Dorsolateral prefrontal cortex (tissue), 120 donors: ENCODE measurements at regions of chr1 and their contacts with region 1.

Region 1: DNA sequence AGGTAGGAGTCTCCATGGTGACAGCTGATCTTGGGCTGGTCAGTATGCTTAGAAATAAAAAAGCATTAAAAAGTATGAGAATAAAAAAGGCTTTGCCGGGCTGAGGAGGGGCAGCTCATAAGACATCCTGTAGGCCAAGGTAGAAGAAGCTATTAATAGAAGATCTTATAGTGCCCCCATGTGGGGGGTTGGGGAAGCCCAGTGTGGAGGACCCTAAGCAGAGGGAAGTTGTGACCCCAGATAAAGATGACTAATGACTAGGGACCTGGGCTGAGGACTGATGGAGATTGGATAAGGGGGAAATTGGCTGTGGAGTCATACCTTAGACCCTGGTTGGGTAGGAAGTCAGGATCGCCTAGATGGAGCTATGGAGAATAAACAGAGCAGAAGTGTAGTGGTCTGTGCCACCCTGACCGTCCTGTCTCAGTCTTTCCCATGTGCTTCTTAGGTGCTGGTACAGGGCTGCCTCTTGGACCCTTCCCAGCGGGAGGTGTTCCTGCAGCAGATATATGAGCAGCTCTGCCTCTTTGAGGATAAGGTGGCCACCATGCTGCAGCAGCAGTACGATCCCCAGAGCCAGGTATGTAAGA is 25.0 kb downstream of the SZT2 start:
- DNase-seq: peak in 5 of 10 donors; percentile 25 to 48 (median 44)
- H3K4me3 ChIP-seq: no peak overlapping the region
- H3K27ac ChIP-seq: peak overlapping the region in 1 of 59 donors; percentile 1
- H3K27me3 ChIP-seq: no peaks in the 10 kb centered on the region
- CTCF ChIP-seq: peak in 55 of 56 donors; percentile 32 to 80 (median 66)

Region 2: DNA sequence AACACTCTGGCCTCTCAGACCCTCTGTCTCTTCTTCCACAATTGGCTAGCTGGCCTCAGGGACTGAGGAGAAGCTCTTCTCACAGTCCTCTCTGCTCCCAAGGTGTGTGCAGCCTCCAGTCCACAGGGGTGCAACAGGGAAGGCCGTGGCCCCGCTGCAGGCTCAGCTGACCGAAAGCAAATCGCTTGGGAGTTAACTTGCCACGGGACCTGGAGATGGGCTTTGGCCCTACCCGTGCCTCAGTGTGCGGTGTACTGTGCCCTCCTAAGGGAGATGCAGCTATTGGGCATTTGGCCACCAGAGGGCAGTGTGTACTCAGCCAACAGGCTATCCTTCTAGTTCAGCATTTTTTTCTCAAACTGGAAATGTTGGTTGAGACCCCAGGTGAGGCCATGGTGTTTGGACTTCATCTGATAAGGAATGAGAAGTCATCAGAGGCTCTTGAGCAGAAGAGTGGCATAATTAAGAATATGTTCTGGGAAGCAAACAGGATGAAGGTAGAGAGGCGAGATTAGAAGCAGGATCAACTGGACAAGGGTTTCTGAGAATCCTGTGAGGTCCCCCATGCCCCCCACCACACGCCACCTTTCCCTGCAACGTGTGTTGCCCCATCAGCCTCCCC is 187.5 kb before region 1 on chr1:
- intact Hi-C with region 1: loop called (anchors 2 to 10 kb)
- DNase-seq: peak; percentile 79 to 91 (median 88)
- H3K4me3 ChIP-seq: no peak overlapping the region
- H3K27ac ChIP-seq: peak overlapping the region in 3 of 59 donors; percentile 13 to 49 (median 27)
- H3K27me3 ChIP-seq: no peaks in the 10 kb centered on the region
- CTCF ChIP-seq: peak; percentile 91 to 100 (median 97)

Region 3: GRCh38 chr1:43304314-43304681 is 110.4 kb before region 1 on chr1:
- intact Hi-C with region 1: no loop called
- DNase-seq: peak in 1 of 10 donors; percentile 39
- H3K4me3 ChIP-seq: peak overlapping the region in 13 of 59 donors; percentile 2 to 52 (median 27)
- H3K27ac ChIP-seq: peak overlapping the region in 44 of 59 donors; percentile 1 to 100 (median 86)
- H3K27me3 ChIP-seq: no peaks in the 10 kb centered on the region
- CTCF ChIP-seq: peak in 2 of 56 donors; percentile 11

Region 4: DNA sequence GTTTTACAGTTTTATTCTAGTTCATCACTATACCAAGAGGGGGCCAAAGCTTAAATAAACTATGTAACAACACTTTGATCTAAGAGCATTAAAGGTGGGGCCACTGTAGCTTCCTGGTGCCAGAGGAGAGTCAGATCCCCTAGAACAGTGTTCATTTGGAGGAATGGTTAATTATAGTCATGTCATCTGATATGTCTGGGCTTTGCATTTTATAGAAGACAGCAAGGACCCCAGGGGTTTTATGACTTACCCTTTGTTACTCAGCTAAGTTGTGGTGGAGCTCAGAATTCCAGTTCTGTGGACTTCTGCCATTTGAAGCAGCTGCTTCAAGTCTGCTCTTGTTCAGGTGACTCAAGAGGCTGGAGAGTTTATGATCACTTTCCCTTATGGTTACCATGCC is 251.9 kb after region 1 on chr1:
- intact Hi-C with region 1: no loop called
- DNase-seq: no peak
- H3K4me3 ChIP-seq: no peak overlapping the region
- H3K27ac ChIP-seq: no peak overlapping the region
- H3K27me3 ChIP-seq: no peaks in the 10 kb centered on the region
- CTCF ChIP-seq: no peak